Panc1 (cell line): ENCODE measurements at regions of chr3 and their contacts with region 1.

Region 1: DNA sequence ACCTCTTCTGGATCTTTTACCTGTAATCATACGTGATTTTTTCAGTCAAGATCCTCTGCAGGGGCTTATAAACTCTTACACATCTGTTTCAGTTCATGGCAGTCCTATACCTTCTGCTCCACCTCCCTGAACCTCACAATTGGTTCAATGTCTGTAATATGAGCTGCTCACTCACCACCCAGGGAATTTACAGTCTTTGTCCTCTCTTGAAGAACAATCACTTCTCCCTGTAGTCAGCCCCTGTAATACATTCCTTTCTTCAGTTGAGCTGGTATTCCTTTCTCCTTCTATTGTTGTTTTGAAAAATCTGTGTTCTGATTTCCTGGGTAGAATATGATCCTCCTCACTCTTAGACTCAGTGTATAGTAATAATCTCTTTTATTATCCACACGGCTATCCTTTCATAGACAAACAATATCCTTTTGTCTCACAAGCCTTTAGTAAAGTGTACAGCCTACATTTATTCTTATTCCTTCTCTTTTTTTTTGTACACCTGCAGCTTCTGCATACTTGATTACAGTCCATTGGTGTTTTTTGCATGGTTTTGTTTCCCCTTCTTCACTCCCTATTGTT is 101.8 kb downstream of the NECTIN3 start:
- DNase-seq: no peak
- ATAC-seq: no peak
- H3K4me3 ChIP-seq: no peak overlapping the region
- H3K27ac ChIP-seq: no peak overlapping the region
- H3K4me1 ChIP-seq: no peaks in the 10 kb centered on the region
- H3K27me3 ChIP-seq: no peaks in the 10 kb centered on the region
- CTCF ChIP-seq: no peak

Region 2: DNA sequence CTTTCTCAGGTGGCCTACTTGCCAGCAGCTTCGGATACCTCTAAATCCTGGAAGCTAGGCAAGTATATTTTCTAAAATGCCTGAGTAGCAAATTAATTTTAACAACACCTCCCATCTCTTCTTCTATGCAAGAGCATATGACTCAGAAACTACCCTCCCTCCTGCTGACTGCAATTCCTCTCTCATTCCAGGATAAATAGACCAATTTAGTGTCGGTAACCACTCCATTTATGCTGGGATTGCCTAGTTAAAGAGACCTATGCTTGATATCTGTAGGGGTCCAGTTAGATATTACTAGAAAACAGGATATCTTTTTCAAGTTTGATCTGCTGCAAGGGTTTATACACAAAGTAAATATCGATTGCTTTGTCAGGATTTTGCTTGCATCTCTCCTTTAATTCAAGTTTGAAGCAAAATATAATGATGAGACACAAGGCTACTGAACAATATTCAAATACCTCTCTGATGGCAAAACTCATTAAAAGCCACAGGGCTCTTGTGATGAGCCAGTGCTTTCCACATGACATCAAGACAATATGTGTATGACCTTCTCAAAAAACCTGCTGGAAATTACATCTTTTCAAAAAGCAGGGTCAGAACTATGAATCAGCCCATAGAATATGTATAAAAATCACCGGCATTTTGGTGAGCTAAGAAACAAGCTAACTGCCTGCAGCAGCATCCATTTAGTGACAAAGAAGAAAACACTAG is 593.4 kb before region 1 on chr3:
- CTCF ChIA-PET with region 1: no interaction called
- POLR2A ChIA-PET with region 1: interaction called, 13 read pairs
- in situ Hi-C with region 1: no loop called
- intact Hi-C with region 1: no loop called
- DNase-seq: no peak
- ATAC-seq: no peak
- H3K4me3 ChIP-seq: no peak overlapping the region
- H3K27ac ChIP-seq: no peak overlapping the region
- H3K4me1 ChIP-seq: no peaks in the 10 kb centered on the region
- H3K27me3 ChIP-seq: no peaks in the 10 kb centered on the region
- CTCF ChIP-seq: no peak

Region 3: DNA sequence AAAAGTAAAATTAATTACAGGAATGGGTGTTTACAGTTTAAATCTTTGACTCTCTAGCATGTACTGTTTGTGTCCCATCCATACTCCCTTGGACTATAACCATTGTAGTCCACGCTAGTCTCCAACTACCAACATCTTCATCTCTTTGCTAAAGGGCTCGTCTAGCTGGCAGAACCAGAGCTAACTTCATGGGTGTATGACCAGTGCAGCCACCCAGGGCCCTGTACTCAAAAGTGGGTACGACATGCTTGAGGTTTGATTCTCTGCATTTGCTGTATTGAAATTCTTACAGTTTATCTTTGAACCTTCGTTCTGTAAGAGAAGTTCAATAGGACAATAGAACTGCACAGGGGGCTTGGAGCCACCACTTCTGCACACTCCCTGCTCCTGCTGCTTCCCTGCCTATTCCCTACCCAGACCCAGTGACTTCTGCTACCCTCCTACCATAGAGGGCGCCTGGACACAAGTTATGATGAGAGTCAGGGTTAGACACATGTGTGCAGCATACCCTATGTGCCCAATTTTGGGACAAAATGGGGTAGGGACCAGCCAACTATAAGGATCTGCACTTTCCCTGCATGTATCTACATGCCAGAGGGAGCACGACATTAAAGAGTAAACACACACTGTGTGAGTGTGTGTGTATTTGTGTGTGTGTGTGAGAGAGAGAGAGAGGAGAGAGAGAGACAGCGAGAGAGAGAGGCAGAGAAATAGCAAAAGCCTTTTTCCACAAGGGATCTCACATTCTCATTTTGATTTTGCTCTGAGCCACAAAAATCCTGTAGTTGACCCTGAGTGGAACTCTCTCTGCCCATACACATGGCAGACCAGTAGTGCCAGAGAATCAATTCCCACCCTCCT is 160.8 kb before region 1 on chr3:
- CTCF ChIA-PET with region 1: no interaction called
- POLR2A ChIA-PET with region 1: no interaction called
- in situ Hi-C with region 1: no loop called
- intact Hi-C with region 1: no loop called
- DNase-seq: no peak
- ATAC-seq: no peak
- H3K4me3 ChIP-seq: no peak overlapping the region
- H3K27ac ChIP-seq: no peak overlapping the region
- H3K4me1 ChIP-seq: no peaks in the 10 kb centered on the region
- H3K27me3 ChIP-seq: no peaks in the 10 kb centered on the region
- CTCF ChIP-seq: no peak

Region 4: DNA sequence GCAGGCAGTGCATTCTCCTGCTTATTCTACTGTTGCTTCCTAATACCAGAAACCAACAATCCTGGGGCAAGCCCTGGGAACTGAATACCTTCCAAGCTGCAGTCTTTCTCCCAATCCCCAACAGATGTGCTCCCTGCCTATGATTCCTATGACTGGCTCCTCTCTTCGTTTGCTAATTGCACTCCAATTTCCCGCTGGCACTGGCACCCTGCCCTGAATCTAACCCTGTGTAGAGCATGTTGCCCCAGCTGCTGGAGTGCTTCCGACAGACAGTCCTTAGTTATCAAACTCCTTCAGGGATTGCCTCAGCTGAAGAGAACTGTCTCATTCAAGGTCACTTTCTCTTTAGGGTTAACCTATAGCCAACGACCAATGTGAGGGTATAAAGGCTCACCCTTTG is 112.3 kb after region 1 on chr3:
- CTCF ChIA-PET with region 1: no interaction called
- POLR2A ChIA-PET with region 1: no interaction called
- in situ Hi-C with region 1: no loop called
- intact Hi-C with region 1: no loop called
- DNase-seq: no peak
- ATAC-seq: no peak
- H3K4me3 ChIP-seq: no peak overlapping the region
- H3K27ac ChIP-seq: no peak overlapping the region
- H3K4me1 ChIP-seq: no peaks in the 10 kb centered on the region
- H3K27me3 ChIP-seq: no peaks in the 10 kb centered on the region
- CTCF ChIP-seq: no peak

Region 5: GRCh38 chr3:111311709-111312235 is 138.4 kb after region 1 on chr3:
- CTCF ChIA-PET with region 1: no interaction called
- POLR2A ChIA-PET with region 1: no interaction called
- in situ Hi-C with region 1: no loop called
- intact Hi-C with region 1: no loop called
- DNase-seq: no peak
- ATAC-seq: no peak
- H3K4me3 ChIP-seq: no peak overlapping the region
- H3K27ac ChIP-seq: no peak overlapping the region
- H3K4me1 ChIP-seq: no peaks in the 10 kb centered on the region
- H3K27me3 ChIP-seq: no peaks in the 10 kb centered on the region
- CTCF ChIP-seq: no peak